Activated T-helper 2 cell treated with anti-CD3 and anti-CD28 coated beads, Interferon-gamma antibody, Interleukin-2, Interleukin-4, amounts not matched to agents 10 μg/mL and 5 μg/mL and 100 μg/mL, durations not matched to agents 14 hours and 24 hours and 36 hours (primary cell): ENCODE measurements at regions of chr10 and their contacts with region 1.

Region 1: GRCh38 chr10:133124357-133125211 is 35.4 kb upstream of the KNDC1 start:
- DNase-seq: no peak
- H3K4me3 Mint-ChIP-seq: no peak overlapping the region
- H3K27ac Mint-ChIP-seq: no peak overlapping the region
- H3K4me1 Mint-ChIP-seq: peaks cover 5% of the 10 kb centered on the region
- H3K27me3 Mint-ChIP-seq: peaks cover 5% of the 10 kb centered on the region

Region 2: GRCh38 chr10:132904181-132904819 is 220.3 kb before region 1 on chr10:
- intact Hi-C with region 1: loop called (anchors 10 kb)
- DNase-seq: no peak
- H3K4me3 Mint-ChIP-seq: no peak overlapping the region
- H3K27ac Mint-ChIP-seq: peak overlapping the region; percentile 4
- H3K4me1 Mint-ChIP-seq: peaks cover 10% of the 10 kb centered on the region
- H3K27me3 Mint-ChIP-seq: no peaks in the 10 kb centered on the region

Region 3: GRCh38 chr10:132939957-132940790 is 184.4 kb before region 1 on chr10:
- intact Hi-C with region 1: loop called (anchors 2 kb)
- DNase-seq: peak; percentile 22
- H3K4me3 Mint-ChIP-seq: no peak overlapping the region
- H3K27ac Mint-ChIP-seq: no peak overlapping the region
- H3K4me1 Mint-ChIP-seq: peaks cover 3% of the 10 kb centered on the region
- H3K27me3 Mint-ChIP-seq: peaks cover 28% of the 10 kb centered on the region

Region 4: GRCh38 chr10:133196221-133196915 is 71.8 kb after region 1 on chr10:
- intact Hi-C with region 1: no loop called
- DNase-seq: no peak
- H3K4me3 Mint-ChIP-seq: no peak overlapping the region
- H3K27ac Mint-ChIP-seq: no peak overlapping the region
- H3K4me1 Mint-ChIP-seq: no peaks in the 10 kb centered on the region
- H3K27me3 Mint-ChIP-seq: peaks cover 10% of the 10 kb centered on the region